Natural killer cell (primary cell): ENCODE measurements at regions of chr10 and their contacts with region 1.

Region 1: GRCh38 chr10:34637418-34637911 is 177.6 kb downstream of the PARD3 start:
- DNase-seq: peak; percentile 62 to 75
- ATAC-seq: peak; percentile 66 to 78 (median 71)
- H3K4me3 ChIP-seq: no peak overlapping the region
- H3K4me3 Mint-ChIP-seq: no peak overlapping the region
- H3K27ac ChIP-seq: no peak overlapping the region
- H3K27ac Mint-ChIP-seq: no peak overlapping the region
- H3K4me1 ChIP-seq: peaks cover 4% of the 10 kb centered on the region
- H3K4me1 Mint-ChIP-seq: peaks cover 0 to 9% of the 10 kb centered on the region in 2 donors
- H3K27me3 ChIP-seq: no peaks in the 10 kb centered on the region
- H3K27me3 Mint-ChIP-seq: peaks cover 16 to 24% of the 10 kb centered on the region in 2 donors
- CTCF ChIP-seq: peak; percentile 83

Region 2: GRCh38 chr10:33193057-33193700 is 1444.3 kb before region 1 on chr10:
- intact Hi-C with region 1: loop called (anchors 1 kb)
- DNase-seq: peak; percentile 44 to 82
- ATAC-seq: peak; percentile 64 to 93 (median 88)
- H3K4me3 ChIP-seq: no peak overlapping the region
- H3K4me3 Mint-ChIP-seq: no peak overlapping the region
- H3K27ac ChIP-seq: no peak overlapping the region
- H3K27ac Mint-ChIP-seq: no peak overlapping the region
- H3K4me1 ChIP-seq: no peaks in the 10 kb centered on the region
- H3K4me1 Mint-ChIP-seq: no peaks in the 10 kb centered on the region
- H3K27me3 ChIP-seq: no peaks in the 10 kb centered on the region
- H3K27me3 Mint-ChIP-seq: peaks cover 17 to 30% of the 10 kb centered on the region in 2 donors
- CTCF ChIP-seq: peak; percentile 65

Region 3: GRCh38 chr10:33330543-33331378 is 1306.7 kb before region 1 on chr10:
- intact Hi-C with region 1: loop called (anchors 1 kb)
- DNase-seq: peak; percentile 63 to 86
- ATAC-seq: peak; percentile 76 to 79 (median 78)
- H3K4me3 ChIP-seq: no peak overlapping the region
- H3K4me3 Mint-ChIP-seq: no peak overlapping the region
- H3K27ac ChIP-seq: no peak overlapping the region
- H3K27ac Mint-ChIP-seq: no peak overlapping the region
- H3K4me1 ChIP-seq: peaks cover 20% of the 10 kb centered on the region
- H3K4me1 Mint-ChIP-seq: peaks cover 9 to 19% of the 10 kb centered on the region in 2 donors
- H3K27me3 ChIP-seq: peaks cover 36% of the 10 kb centered on the region
- H3K27me3 Mint-ChIP-seq: peaks cover 47 to 76% of the 10 kb centered on the region in 2 donors
- CTCF ChIP-seq: peak; percentile 93

Region 4: GRCh38 chr10:34223658-34224057 is 413.8 kb before region 1 on chr10:
- intact Hi-C with region 1: loop called (anchors 10 kb)
- DNase-seq: no peak
- ATAC-seq: no peak
- H3K4me3 ChIP-seq: no peak overlapping the region
- H3K4me3 Mint-ChIP-seq: no peak overlapping the region
- H3K27ac ChIP-seq: no peak overlapping the region
- H3K27ac Mint-ChIP-seq: no peak overlapping the region
- H3K4me1 ChIP-seq: no peaks in the 10 kb centered on the region
- H3K4me1 Mint-ChIP-seq: peaks cover 0 to 21% of the 10 kb centered on the region in 2 donors
- H3K27me3 ChIP-seq: no peaks in the 10 kb centered on the region
- H3K27me3 Mint-ChIP-seq: peaks cover 14 to 15% of the 10 kb centered on the region in 2 donors
- CTCF ChIP-seq: no peak

Region 5: DNA sequence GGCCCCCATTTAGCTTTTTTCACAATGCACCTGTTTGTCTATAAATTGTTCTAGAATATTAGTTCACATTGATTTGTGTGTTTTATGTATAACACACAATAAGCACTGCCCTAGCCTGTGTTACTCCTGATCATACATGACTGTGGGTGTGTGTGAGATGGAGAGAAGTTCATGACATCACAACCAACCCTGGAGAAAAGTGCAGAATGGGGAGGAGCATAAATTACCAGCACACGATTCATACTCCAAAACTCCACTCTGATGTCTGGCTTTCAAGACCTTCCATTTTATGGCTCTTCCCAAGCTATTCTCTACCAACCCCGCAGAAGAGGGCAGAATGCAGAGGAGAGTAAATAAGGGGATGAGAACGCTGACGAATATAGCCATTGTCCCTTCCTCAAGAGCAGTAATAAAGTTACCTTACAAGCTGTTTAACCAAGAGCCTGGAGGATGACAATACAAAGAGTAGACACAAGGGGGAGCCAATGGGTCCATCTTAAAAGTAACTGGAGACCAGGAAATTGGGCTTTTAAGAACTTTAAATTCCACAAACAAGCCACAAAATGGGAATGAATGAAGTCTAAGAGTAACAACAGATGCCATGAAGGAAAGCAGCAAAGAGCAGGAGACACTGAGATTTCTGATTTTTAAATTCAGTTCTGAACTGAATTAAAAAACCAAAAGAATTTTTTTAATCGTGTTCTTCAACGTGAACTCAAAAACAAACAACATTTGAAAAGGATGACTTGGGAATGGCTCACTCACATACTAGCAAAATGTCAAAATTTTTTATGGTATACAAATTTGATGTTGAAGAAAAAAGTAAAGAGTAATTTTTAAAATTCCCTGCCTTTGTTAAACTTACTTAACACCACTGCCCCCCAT is 18.1 kb after region 1 on chr10:
- intact Hi-C with region 1: no loop called
- DNase-seq: peak in 1 of 2 donors; percentile 48
- ATAC-seq: peak in 1 of 3 donors; percentile 53
- H3K4me3 ChIP-seq: no peak overlapping the region
- H3K4me3 Mint-ChIP-seq: no peak overlapping the region
- H3K27ac ChIP-seq: no peak overlapping the region
- H3K27ac Mint-ChIP-seq: no peak overlapping the region
- H3K4me1 ChIP-seq: no peaks in the 10 kb centered on the region
- H3K4me1 Mint-ChIP-seq: no peaks in the 10 kb centered on the region
- H3K27me3 ChIP-seq: no peaks in the 10 kb centered on the region
- H3K27me3 Mint-ChIP-seq: peaks cover 2 to 20% of the 10 kb centered on the region in 2 donors
- CTCF ChIP-seq: peak; percentile 41